ENCODE measurements at regions of chr21 and their contacts with region 1.

Region 1: DNA sequence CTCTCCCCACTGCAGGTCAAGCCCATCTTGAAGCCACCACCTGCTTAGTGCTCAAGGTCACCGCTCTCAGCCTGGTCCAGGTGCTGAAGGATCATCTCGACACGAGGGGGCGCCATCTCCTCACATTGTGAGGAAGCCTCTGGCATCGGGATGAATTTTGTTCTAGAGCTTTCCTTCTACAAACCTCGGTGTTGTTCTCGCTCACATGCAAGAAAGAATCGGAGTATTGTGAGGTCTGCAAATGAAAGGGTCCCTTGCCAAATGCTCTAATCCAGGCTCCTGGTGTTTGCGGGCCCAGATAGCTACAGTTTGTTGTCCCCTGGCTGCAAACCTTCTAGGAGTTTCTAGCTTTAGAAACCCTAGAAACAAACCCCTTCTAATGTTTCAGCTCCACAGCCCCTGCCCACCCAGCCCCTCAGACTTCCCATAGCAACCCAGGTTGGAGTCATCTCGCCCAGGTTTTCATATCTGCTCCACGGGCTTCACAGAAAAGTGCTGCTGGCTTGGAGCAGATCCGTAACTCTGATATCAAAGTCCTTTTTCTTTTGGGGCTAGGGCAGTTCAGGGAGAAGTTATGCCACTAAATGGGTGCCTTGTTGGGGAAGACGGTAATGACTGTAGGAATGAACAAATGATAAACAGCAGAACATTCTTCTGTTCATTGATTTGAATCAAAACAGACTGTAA is 8.6 kb upstream of the ATP5PO start:
- DNase-seq: peak; percentile 72
- ATAC-seq: peak; percentile 97
- H3K4me3 ChIP-seq: no peak overlapping the region
- H3K27ac ChIP-seq: no peak overlapping the region
- H3K4me1 ChIP-seq: no peaks in the 10 kb centered on the region; the same call in 1 of the 2 replicates
- H3K27me3 ChIP-seq: peaks cover 6% of the 10 kb centered on the region
- CTCF ChIP-seq: peak; percentile 96
- POLR2A ChIP-seq: peak; percentile 38; the same call in 1 of the 2 replicates
- RAD21 ChIP-seq: peak; percentile 100

Region 2: GRCh38 chr21:32929633-32930038 is 994.6 kb before region 1 on chr21:
- CTCF ChIA-PET with region 1: no interaction called
- POLR2A ChIA-PET with region 1: no interaction called
- dilution Hi-C with region 1: no loop called
- in situ Hi-C with region 1: no loop called
- intact Hi-C with region 1: no loop called
- DNase-seq: no peak
- ATAC-seq: no peak
- H3K4me3 ChIP-seq: no peak overlapping the region
- H3K27ac ChIP-seq: no peak overlapping the region
- H3K4me1 ChIP-seq: no peaks in the 10 kb centered on the region
- H3K27me3 ChIP-seq: peaks cover 6% of the 10 kb centered on the region
- CTCF ChIP-seq: no peak
- POLR2A ChIP-seq: no peak
- RAD21 ChIP-seq: no peak

Region 3: DNA sequence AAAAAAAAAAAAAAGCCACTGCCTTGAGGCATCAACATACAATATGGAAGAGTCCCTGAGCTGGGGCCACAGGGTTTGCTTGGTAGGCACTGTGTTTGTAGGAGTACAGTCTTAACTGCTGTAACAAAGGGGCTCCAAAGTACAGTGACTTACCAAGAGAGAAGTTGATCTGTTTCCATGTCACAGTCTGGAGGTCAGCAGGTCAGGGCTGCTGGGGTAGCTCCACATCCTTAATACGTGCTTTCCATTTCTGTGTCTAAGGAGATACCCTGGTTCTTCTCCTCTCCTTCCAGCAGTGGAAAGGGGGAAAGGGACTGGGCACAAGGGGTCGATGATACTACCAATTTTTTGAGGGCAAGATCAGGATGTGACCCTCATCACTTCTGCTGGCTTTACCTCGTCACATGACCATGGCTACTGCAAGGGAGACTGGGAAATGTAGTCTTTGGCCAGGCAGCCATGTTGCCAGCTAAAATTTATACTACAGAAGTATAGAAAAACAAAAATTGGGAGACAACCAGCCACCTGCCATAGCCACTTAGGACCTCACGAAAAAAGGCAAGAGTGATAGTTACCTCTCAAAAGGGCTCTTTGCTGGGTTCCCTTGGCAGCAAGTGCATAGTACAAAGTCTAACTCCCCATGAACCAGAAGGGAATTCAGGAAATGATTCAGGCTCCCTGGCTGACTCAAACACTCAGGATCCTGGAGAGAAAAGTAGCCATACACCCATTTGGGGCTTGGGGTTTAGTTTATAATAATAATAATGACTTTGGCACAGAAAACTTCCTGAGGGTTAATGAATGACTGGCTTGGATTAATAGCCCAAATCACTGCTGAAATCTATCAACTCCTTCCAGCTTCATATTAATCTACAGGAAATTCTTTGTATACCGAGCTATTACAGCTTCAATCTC is 44.1 kb after region 1 on chr21:
- CTCF ChIA-PET with region 1: no interaction called
- POLR2A ChIA-PET with region 1: no interaction called
- dilution Hi-C with region 1: no loop called
- in situ Hi-C with region 1: no loop called
- intact Hi-C with region 1: no loop called
- DNase-seq: peak; percentile 64
- ATAC-seq: peak; percentile 82
- H3K4me3 ChIP-seq: no peak overlapping the region
- H3K27ac ChIP-seq: peak overlapping the region; percentile 70
- H3K4me1 ChIP-seq: peaks cover 16% of the 10 kb centered on the region; the same call in 1 of the 2 replicates
- H3K27me3 ChIP-seq: no peaks in the 10 kb centered on the region
- CTCF ChIP-seq: no peak
- POLR2A ChIP-seq: no peak
- RAD21 ChIP-seq: no peak

Region 4: DNA sequence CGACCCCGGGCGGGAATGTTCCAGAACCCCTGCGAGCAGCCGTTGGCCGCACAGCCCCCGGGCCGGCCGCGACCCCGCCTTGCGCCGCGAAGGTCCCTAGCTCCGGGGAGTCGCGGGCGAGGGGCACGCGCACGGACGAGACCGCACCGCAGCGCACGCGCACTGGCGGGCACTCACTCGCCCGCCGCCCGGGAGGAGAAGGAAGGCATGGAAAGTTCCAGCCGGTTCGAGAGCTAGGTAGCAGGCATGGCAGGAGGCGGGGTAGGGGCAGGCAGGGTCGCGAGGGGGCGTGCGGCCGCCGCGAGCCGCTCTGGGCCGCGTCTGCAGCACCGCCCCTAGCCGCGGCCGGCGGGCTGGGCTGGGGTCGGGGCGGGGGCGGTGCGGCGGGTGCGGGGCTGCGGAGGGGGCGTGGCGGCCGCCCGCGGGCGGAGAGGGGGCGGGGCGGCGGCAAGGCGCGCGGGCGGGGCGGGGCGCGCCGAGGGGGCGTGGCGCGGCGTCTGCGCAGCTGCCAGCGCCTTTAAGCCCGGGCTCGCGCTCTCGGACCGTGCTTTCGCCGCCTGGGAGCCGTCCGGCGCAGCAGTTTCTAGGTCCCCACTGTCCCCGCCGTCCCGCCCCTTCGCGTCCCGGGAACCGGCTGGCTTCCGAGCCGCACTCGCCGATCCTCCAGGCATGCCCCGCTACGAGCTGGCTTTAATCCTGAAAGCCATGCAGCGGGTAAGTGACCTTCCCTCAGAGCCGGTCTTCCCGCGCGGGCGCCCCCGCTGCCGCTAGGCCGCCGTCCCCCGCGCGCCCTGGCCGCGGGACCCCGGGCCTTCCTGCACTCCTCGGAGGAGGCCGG is 149.0 kb after region 1 on chr21 and contains the starts of genes MRPS6 and SLC5A3:
- CTCF ChIA-PET with region 1: interaction called, 8 read pairs
- POLR2A ChIA-PET with region 1: no interaction called
- dilution Hi-C with region 1: no loop called
- in situ Hi-C with region 1: no loop called
- intact Hi-C with region 1: loop called (anchors 1 kb)
- DNase-seq: peak; percentile 81
- ATAC-seq: peak; percentile 88
- H3K4me3 ChIP-seq: peak within 1 kb of the TSS; percentile 100
- H3K27ac ChIP-seq: peak within 1 kb of the TSS; percentile 87
- H3K4me1 ChIP-seq: peaks cover 3% of the 10 kb centered on the region; the same call in 1 of the 2 replicates
- H3K27me3 ChIP-seq: peaks cover 5% of the 10 kb centered on the region; the same call in 1 of the 2 replicates
- CTCF ChIP-seq: peak; percentile 26; the same call in 1 of the 2 replicates
- POLR2A ChIP-seq: peak; percentile 89
- RAD21 ChIP-seq: 0 out of 2 replicates have a peak, but pooled peaks have one; percentile 7
- total RNA-seq, gene MRPS6: 7.5 and 11.9 TPM in 2 replicates
- total RNA-seq, gene SLC5A3: 9.9 and 15.6 TPM in 2 replicates

Region 5: DNA sequence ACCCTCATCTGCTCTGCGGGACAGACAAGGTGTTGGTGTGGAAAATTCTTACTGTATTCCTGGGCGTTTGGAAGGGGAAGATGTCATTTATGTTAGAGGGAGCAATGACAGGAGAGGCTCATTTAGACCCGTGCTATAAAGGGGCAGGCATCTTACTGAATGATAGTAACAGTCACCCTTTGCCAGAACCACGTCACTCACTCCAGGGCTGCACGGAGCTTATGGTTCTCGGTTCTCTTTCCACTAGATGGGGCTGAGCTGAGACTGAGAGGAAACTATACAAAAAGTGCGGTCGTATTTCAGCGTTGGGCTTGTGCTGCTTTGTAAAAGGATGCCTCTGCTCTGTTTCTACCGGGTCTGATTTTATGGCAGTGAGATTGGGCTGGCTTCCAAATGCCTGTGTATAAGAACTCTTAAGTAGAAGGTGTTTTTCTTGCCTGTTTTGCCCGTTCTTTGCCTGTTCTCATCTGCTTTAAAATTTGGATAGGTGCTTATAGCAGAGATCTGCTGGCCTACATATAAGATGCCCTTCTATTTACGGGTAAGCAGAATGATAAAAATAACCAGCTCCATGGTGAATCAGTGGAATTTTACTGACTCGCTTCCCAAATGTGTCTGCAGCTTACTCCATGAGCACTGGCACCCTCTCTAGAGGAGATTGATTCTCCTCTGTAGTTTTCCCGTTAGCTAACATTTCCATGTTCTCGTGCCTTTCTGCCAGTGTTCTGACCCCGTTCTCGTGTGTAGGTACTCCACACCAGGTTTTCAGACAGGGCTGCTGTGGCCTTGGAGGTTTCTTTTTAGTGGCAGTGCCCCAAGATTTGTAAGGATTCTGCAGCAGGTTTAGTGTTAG is 205.0 kb after region 1 on chr21:
- CTCF ChIA-PET with region 1: interaction called, 5 read pairs
- POLR2A ChIA-PET with region 1: no interaction called
- dilution Hi-C with region 1: no loop called
- in situ Hi-C with region 1: no loop called
- intact Hi-C with region 1: loop called (anchors 2 kb)
- DNase-seq: peak; percentile 92
- ATAC-seq: peak; percentile 92
- H3K4me3 ChIP-seq: peak overlapping the region; percentile 20; the same call in 1 of the 2 replicates
- H3K27ac ChIP-seq: peak overlapping the region; percentile 90
- H3K4me1 ChIP-seq: peaks cover 30% of the 10 kb centered on the region
- H3K27me3 ChIP-seq: no peaks in the 10 kb centered on the region
- CTCF ChIP-seq: peak; percentile 63
- POLR2A ChIP-seq: no peak
- RAD21 ChIP-seq: peak; percentile 51

Region 6: GRCh38 chr21:34243562-34243961 is 319.3 kb after region 1 on chr21:
- CTCF ChIA-PET with region 1: interaction called, 5 read pairs
- POLR2A ChIA-PET with region 1: no interaction called
- dilution Hi-C with region 1: no loop called
- in situ Hi-C with region 1: no loop called
- intact Hi-C with region 1: loop called (anchors 1 kb)
- DNase-seq: peak; percentile 11
- ATAC-seq: no peak
- H3K4me3 ChIP-seq: no peak overlapping the region
- H3K27ac ChIP-seq: no peak overlapping the region
- H3K4me1 ChIP-seq: no peaks in the 10 kb centered on the region
- H3K27me3 ChIP-seq: peaks cover 41% of the 10 kb centered on the region
- CTCF ChIP-seq: peak; percentile 47
- POLR2A ChIP-seq: no peak
- RAD21 ChIP-seq: peak; percentile 58

Region 7: GRCh38 chr21:34351786-34352241 is 427.6 kb after region 1 on chr21:
- CTCF ChIA-PET with region 1: interaction called, 25 read pairs
- POLR2A ChIA-PET with region 1: no interaction called
- dilution Hi-C with region 1: no loop called
- in situ Hi-C with region 1: no loop called
- intact Hi-C with region 1: loop called (anchors 1 kb)
- DNase-seq: peak; percentile 26
- ATAC-seq: peak; percentile 91
- H3K4me3 ChIP-seq: no peak overlapping the region
- H3K27ac ChIP-seq: no peak overlapping the region
- H3K4me1 ChIP-seq: no peaks in the 10 kb centered on the region; the same call in 1 of the 2 replicates
- H3K27me3 ChIP-seq: peaks cover 20% of the 10 kb centered on the region
- CTCF ChIP-seq: peak; percentile 67
- POLR2A ChIP-seq: no peak
- RAD21 ChIP-seq: peak; percentile 83

Measured in IMR-90 (cell line).